Transverse colon (tissue), 4 donors: ENCODE measurements at regions of chr2 and their contacts with region 1.

Region 1: GRCh38 chr2:168920504-168921157 is 19.5 kb downstream of the G6PC2 start:
- DNase-seq: no peak
- H3K4me3 ChIP-seq: no peak overlapping the region
- H3K27ac ChIP-seq: no peak overlapping the region
- H3K4me1 ChIP-seq: no peaks in the 10 kb centered on the region
- H3K27me3 ChIP-seq: no peaks in the 10 kb centered on the region
- CTCF ChIP-seq: peak; percentile 58 to 73 (median 69)
- EP300 ChIP-seq: no peak
- POLR2A ChIP-seq: no peak

Region 2: GRCh38 chr2:168136392-168136977 is 784.1 kb before region 1 on chr2:
- in situ Hi-C with region 1: loop called in 1 of 4 experiments (anchors 25 kb)
- intact Hi-C with region 1: no loop called
- DNase-seq: no peak
- H3K4me3 ChIP-seq: no peak overlapping the region
- H3K27ac ChIP-seq: no peak overlapping the region
- H3K4me1 ChIP-seq: peaks cover 0 to 13% (median 0%) of the 10 kb centered on the region in 4 donors
- H3K27me3 ChIP-seq: no peaks in the 10 kb centered on the region
- CTCF ChIP-seq: peak; percentile 56 to 77 (median 65)
- EP300 ChIP-seq: no peak
- POLR2A ChIP-seq: no peak

Region 3: GRCh38 chr2:168758970-168759820 is 161.4 kb before region 1 on chr2:
- in situ Hi-C with region 1: loop called in 1 of 4 experiments (anchors 25 kb)
- intact Hi-C with region 1: no loop called
- DNase-seq: no peak
- H3K4me3 ChIP-seq: no peak overlapping the region
- H3K27ac ChIP-seq: no peak overlapping the region
- H3K4me1 ChIP-seq: peaks cover 0 to 20% (median 6%) of the 10 kb centered on the region in 4 donors
- H3K27me3 ChIP-seq: no peaks in the 10 kb centered on the region
- CTCF ChIP-seq: peak; percentile 48 to 71 (median 60)
- EP300 ChIP-seq: no peak
- POLR2A ChIP-seq: no peak